Naive thymus-derived CD4-positive, alpha-beta T cell (primary cell): ENCODE measurements at regions of chr2 and their contacts with region 1.

Region 1: DNA sequence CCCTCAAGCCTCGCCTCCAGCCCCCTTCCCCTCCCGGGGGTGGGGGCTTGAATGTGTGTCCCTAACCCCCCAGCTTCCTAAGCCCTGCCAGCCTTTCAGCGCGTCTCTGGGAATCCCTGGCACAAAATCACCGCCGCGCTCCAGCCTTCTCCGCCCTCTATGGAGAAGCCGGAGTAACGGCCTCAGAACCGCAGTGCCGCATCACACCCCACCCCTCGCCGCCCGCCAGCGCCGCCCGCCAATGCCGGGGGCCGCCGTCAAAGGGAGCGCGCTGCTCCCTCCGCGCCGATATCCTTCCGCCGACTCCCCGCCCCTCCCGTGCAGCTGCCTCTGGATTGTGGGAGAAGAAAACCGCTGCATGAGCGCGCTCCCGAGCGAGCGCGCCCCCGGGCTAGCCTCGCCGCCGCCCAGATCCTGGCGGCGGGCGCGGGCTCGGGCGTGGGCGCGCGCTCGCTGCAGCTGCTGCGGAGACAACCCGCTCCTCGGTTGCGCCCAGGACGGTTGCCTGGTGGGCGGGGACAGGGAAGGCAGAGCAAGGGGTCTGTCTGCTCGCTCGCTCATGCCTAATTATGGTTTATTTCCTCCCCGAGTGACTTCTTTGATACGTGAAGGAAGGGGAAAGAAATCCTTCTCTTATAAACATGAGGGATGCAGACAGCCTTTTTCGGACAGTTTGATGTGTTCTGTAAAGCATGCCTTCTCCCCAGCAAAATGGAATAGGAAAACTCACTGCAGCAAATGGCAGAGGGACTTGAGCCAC is at the start of gene CCDC88A:
- DNase-seq: peak; percentile 78 to 91 (median 85)
- ATAC-seq: peak; percentile 92
- H3K4me3 ChIP-seq: peak within 1 kb of the TSS; percentile 91
- H3K4me3 Mint-ChIP-seq: peak within 1 kb of the TSS; percentile 86 to 98 (median 94)
- H3K27ac ChIP-seq: peak within 1 kb of the TSS; percentile 69
- H3K27ac Mint-ChIP-seq: peak within 1 kb of the TSS; percentile 50 to 97 (median 85)
- H3K4me1 ChIP-seq: peaks cover 0 to 6% of the 10 kb centered on the region in 2 donors
- H3K4me1 Mint-ChIP-seq: peaks cover 5 to 49% (median 41%) of the 10 kb centered on the region in 7 donors
- H3K27me3 ChIP-seq: no peaks in the 10 kb centered on the region
- H3K27me3 Mint-ChIP-seq: peaks cover 0 to 40% (median 0%) of the 10 kb centered on the region in 5 donors
- total RNA-seq, gene CCDC88A: 9.9 to 53.3 (median 15.9) TPM

Region 2: GRCh38 chr2:53970724-53971602 is 1448.9 kb before region 1 on chr2 and contains the start of gene PSME4:
- CTCF ChIA-PET with region 1: no interaction called
- POLR2A ChIA-PET with region 1: no interaction called
- intact Hi-C with region 1: loop called in 1 of 2 experiments (anchors 2 kb)
- DNase-seq: peak; percentile 80 to 95 (median 90)
- ATAC-seq: peak; percentile 97
- H3K4me3 ChIP-seq: peak within 1 kb of the TSS; percentile 84
- H3K4me3 Mint-ChIP-seq: peak within 1 kb of the TSS; percentile 89 to 100 (median 96)
- H3K27ac ChIP-seq: peak within 1 kb of the TSS; percentile 93
- H3K27ac Mint-ChIP-seq: peak within 1 kb of the TSS; percentile 91 to 99 (median 95)
- H3K4me1 ChIP-seq: peaks cover 17 to 21% of the 10 kb centered on the region in 2 donors
- H3K4me1 Mint-ChIP-seq: peaks cover 37 to 65% (median 54%) of the 10 kb centered on the region in 7 donors
- H3K27me3 ChIP-seq: no peaks in the 10 kb centered on the region
- H3K27me3 Mint-ChIP-seq: no peaks in the 10 kb centered on the region
- total RNA-seq, gene PSME4: 48.8 to 80.1 (median 54.4) TPM

Region 3: GRCh38 chr2:54330162-54330925 is 1089.5 kb before region 1 on chr2:
- CTCF ChIA-PET with region 1: no interaction called
- POLR2A ChIA-PET with region 1: no interaction called
- intact Hi-C with region 1: loop called in 1 of 2 experiments (anchors 1 kb)
- DNase-seq: peak; percentile 64 to 86 (median 82)
- ATAC-seq: peak; percentile 98
- H3K4me3 ChIP-seq: peak overlapping the region; percentile 74
- H3K4me3 Mint-ChIP-seq: peak overlapping the region; percentile 88 to 95 (median 91)
- H3K27ac ChIP-seq: peak overlapping the region; percentile 45
- H3K27ac Mint-ChIP-seq: peak overlapping the region; percentile 5 to 89 (median 76)
- H3K4me1 ChIP-seq: peaks cover 0 to 4% of the 10 kb centered on the region in 2 donors
- H3K4me1 Mint-ChIP-seq: peaks cover 6 to 16% (median 9%) of the 10 kb centered on the region in 7 donors
- H3K27me3 ChIP-seq: peaks cover 0 to 5% of the 10 kb centered on the region in 2 donors
- H3K27me3 Mint-ChIP-seq: peaks cover 7 to 39% (median 14%) of the 10 kb centered on the region in 5 donors

Region 4: GRCh38 chr2:55010149-55010591 is 409.7 kb before region 1 on chr2:
- CTCF ChIA-PET with region 1: no interaction called
- POLR2A ChIA-PET with region 1: no interaction called
- intact Hi-C with region 1: loop called in 1 of 2 experiments (anchors 5 kb)
- DNase-seq: peak; percentile 15 to 71 (median 60)
- ATAC-seq: peak; percentile 94
- H3K4me3 ChIP-seq: peak overlapping the region; percentile 58
- H3K4me3 Mint-ChIP-seq: peak overlapping the region; percentile 88 to 97 (median 92)
- H3K27ac ChIP-seq: peak overlapping the region; percentile 68
- H3K27ac Mint-ChIP-seq: peak overlapping the region; percentile 82 to 96 (median 90)
- H3K4me1 ChIP-seq: peaks cover 27 to 29% of the 10 kb centered on the region in 2 donors
- H3K4me1 Mint-ChIP-seq: peaks cover 44 to 91% (median 79%) of the 10 kb centered on the region in 7 donors
- H3K27me3 ChIP-seq: no peaks in the 10 kb centered on the region
- H3K27me3 Mint-ChIP-seq: no peaks in the 10 kb centered on the region

Region 5: DNA sequence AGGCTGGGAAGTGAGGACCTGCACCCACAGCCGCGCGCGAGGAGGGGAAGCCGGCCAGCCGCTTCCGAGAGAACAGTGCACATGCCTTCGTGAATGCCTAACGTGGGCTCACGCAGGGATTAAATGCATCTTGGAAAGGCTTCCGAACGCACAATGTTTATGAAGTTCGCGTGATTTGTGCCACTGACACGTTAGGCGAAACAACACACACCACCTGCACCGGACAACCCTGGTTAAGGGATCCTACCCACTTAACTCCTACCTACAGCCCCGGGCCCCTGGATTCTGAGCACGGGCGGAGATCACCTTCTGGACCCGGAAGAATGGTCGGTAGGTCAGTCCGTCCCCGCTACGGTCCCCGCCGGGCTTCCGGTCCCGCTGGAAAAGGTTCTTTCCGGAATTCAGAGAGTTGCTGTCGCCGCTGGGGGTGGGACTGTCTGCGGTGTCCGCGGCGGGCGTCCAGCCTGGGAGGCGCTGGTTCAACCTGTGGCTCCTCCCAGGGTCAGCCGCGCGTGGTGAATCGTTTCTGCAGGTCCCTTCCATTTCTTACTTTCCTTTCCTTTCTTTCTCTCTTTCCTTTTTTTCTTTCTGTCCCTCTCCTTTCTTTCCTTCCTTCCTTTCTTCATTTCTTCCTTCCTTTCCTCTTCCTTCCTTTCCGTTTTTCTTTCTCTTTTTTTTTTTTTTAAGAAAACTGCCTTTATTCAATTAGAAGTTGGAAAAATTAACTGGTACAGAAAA is 150.8 kb before region 1 on chr2 and contains the start of gene MTIF2:
- CTCF ChIA-PET with region 1: no interaction called
- POLR2A ChIA-PET with region 1: interaction called, 5 read pairs
- intact Hi-C with region 1: loop called (anchors 1 to 2 kb)
- DNase-seq: peak; percentile 64 to 90 (median 75)
- ATAC-seq: peak; percentile 97
- H3K4me3 ChIP-seq: peak within 1 kb of the TSS; percentile 84
- H3K4me3 Mint-ChIP-seq: peak within 1 kb of the TSS; percentile 78 to 97 (median 94)
- H3K27ac ChIP-seq: peak within 1 kb of the TSS; percentile 79
- H3K27ac Mint-ChIP-seq: peak within 1 kb of the TSS; percentile 94 to 97 (median 96)
- H3K4me1 ChIP-seq: peaks cover 13 to 16% of the 10 kb centered on the region in 2 donors
- H3K4me1 Mint-ChIP-seq: peaks cover 15 to 35% (median 27%) of the 10 kb centered on the region in 7 donors
- H3K27me3 ChIP-seq: no peaks in the 10 kb centered on the region
- H3K27me3 Mint-ChIP-seq: peaks cover 0 to 5% (median 0%) of the 10 kb centered on the region in 5 donors
- total RNA-seq, gene MTIF2: 23.0 to 35.5 (median 28.0) TPM

Region 6: DNA sequence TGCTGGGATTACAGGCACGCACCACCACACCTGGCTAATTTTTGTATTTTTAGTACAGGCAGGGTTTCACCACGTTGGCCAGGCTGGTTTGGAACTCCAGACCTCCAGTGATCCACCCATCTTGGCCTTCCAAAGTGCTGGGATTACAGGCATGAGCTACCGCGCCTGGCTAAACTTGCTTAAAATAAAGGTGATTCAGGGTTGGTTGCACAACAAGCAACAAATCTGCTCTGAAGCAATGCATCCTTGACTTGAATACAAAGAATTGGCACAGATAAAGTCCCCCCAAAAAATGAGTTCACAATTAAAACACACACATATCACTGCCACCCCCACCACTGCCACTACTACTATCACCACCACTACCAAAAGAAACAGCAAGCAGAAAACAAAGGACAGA is 35.1 kb before region 1 on chr2:
- CTCF ChIA-PET with region 1: no interaction called
- POLR2A ChIA-PET with region 1: no interaction called
- intact Hi-C with region 1: no loop called
- DNase-seq: no peak
- ATAC-seq: no peak
- H3K4me3 ChIP-seq: no peak overlapping the region
- H3K4me3 Mint-ChIP-seq: no peak overlapping the region
- H3K27ac ChIP-seq: no peak overlapping the region
- H3K27ac Mint-ChIP-seq: no peak overlapping the region
- H3K4me1 ChIP-seq: no peaks in the 10 kb centered on the region
- H3K4me1 Mint-ChIP-seq: no peaks in the 10 kb centered on the region
- H3K27me3 ChIP-seq: no peaks in the 10 kb centered on the region
- H3K27me3 Mint-ChIP-seq: no peaks in the 10 kb centered on the region

Region 7: GRCh38 chr2:55431982-55432627 is 12.2 kb after region 1 on chr2:
- CTCF ChIA-PET with region 1: interaction called, 4 read pairs
- POLR2A ChIA-PET with region 1: no interaction called
- intact Hi-C with region 1: loop called (anchors 1 kb)
- DNase-seq: peak in 6 of 9 donors; percentile 6 to 54 (median 32)
- ATAC-seq: peak; percentile 66
- H3K4me3 ChIP-seq: no peak overlapping the region
- H3K4me3 Mint-ChIP-seq: no peak overlapping the region
- H3K27ac ChIP-seq: no peak overlapping the region
- H3K27ac Mint-ChIP-seq: peak overlapping the region in 1 of 9 donors; percentile 39
- H3K4me1 ChIP-seq: no peaks in the 10 kb centered on the region
- H3K4me1 Mint-ChIP-seq: peaks cover 0 to 7% (median 2%) of the 10 kb centered on the region in 7 donors
- H3K27me3 ChIP-seq: no peaks in the 10 kb centered on the region
- H3K27me3 Mint-ChIP-seq: peaks cover 0 to 15% (median 0%) of the 10 kb centered on the region in 5 donors

Region 8: GRCh38 chr2:55693181-55694134 is 273.6 kb after region 1 on chr2 and contains the start of gene PNPT1:
- CTCF ChIA-PET with region 1: no interaction called
- POLR2A ChIA-PET with region 1: no interaction called
- intact Hi-C with region 1: loop called (anchors 1 to 10 kb)
- DNase-seq: peak; percentile 78 to 92 (median 90)
- ATAC-seq: peak; percentile 100
- H3K4me3 ChIP-seq: peak within 1 kb of the TSS; percentile 90
- H3K4me3 Mint-ChIP-seq: peak within 1 kb of the TSS; percentile 94 to 99 (median 97)
- H3K27ac ChIP-seq: peak within 1 kb of the TSS; percentile 72
- H3K27ac Mint-ChIP-seq: peak within 1 kb of the TSS; percentile 92 to 99 (median 96)
- H3K4me1 ChIP-seq: peaks cover 0 to 6% of the 10 kb centered on the region in 2 donors
- H3K4me1 Mint-ChIP-seq: peaks cover 18 to 50% (median 43%) of the 10 kb centered on the region in 7 donors
- H3K27me3 ChIP-seq: no peaks in the 10 kb centered on the region
- H3K27me3 Mint-ChIP-seq: peaks cover 0 to 6% (median 3%) of the 10 kb centered on the region in 5 donors
- total RNA-seq, gene PNPT1: 16.9 to 31.2 (median 18.5) TPM